ENCODE measurements at regions of chr11 and their contacts with region 1.

Region 1: DNA sequence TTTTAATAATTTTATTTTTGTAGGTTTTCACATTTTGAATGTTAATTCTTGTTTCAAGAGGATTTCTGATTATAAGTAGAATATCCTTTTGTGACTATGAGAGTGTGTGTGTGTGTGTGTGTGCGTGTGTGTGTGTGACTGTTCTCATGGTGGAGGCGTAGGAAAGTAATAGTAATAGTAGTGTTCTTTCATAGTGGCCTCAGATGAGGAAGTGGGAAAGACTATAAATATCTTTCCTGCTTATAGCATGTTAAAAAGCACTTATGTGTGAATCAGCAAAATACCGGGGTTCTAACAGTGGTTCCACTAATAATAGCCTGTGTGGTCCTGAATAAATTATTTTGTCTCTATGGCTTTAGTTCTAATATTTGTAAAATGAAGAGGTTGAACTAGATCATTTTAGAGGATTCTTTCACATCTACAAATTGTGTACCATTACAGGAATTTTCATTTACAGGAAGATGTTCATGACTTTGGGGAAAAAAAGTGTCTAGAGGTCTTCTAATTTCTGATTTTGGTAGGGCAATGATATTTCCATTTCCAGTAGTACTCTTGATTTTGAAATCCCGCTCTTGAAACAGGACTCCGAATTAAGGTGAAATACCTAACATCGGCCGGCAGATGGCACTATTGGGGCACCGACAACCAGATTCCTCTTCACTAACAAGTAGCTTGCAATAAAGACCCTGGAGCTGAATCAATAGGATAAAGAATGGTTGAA is 29.9 kb upstream of the OR10G7 start:
- H3K4me3 Mint-ChIP-seq: peak overlapping the region; percentile 49
- H3K27ac Mint-ChIP-seq: peak overlapping the region; percentile 86
- H3K4me1 Mint-ChIP-seq: peaks cover 42% of the 10 kb centered on the region
- H3K27me3 Mint-ChIP-seq: peaks cover 25% of the 10 kb centered on the region

Region 2: GRCh38 chr11:123741159-123742028 is 329.7 kb before region 1 on chr11 and contains the start of gene ZNF202:
- intact Hi-C with region 1: loop called (anchors 10 kb)
- H3K4me3 Mint-ChIP-seq: peak within 1 kb of the TSS; percentile 97
- H3K27ac Mint-ChIP-seq: peak within 1 kb of the TSS; percentile 77
- H3K4me1 Mint-ChIP-seq: peaks cover 21% of the 10 kb centered on the region
- H3K27me3 Mint-ChIP-seq: peaks cover 11% of the 10 kb centered on the region

Region 3: DNA sequence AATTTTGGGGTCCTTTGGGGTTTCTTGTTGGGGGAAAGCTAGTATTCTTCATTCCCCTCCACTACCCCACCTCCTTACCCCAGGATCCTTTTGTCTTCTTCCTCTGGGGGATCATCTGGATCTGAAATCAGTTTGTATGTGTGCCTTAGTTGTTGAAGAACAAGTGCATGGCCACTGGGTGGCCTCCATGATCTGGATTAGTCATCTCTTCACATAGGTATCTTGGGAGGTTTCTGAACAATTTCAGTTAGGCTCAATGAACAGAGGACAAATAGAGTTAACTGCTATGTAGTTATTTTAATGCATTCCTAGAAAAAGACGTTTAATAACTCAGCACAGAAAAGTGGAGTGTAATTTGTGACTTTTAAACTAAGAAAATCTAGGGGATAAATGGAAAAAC is 37.1 kb after region 1 on chr11:
- intact Hi-C with region 1: loop called (anchors 5 kb)
- H3K4me3 Mint-ChIP-seq: no peak overlapping the region
- H3K27ac Mint-ChIP-seq: no peak overlapping the region
- H3K4me1 Mint-ChIP-seq: peaks cover 17% of the 10 kb centered on the region
- H3K27me3 Mint-ChIP-seq: peaks cover 13% of the 10 kb centered on the region

Region 4: GRCh38 chr11:124194698-124195410 is 123.8 kb after region 1 on chr11:
- intact Hi-C with region 1: loop called (anchors 1 kb)
- H3K4me3 Mint-ChIP-seq: no peak overlapping the region
- H3K27ac Mint-ChIP-seq: no peak overlapping the region
- H3K4me1 Mint-ChIP-seq: peaks cover 13% of the 10 kb centered on the region
- H3K27me3 Mint-ChIP-seq: peaks cover 3% of the 10 kb centered on the region

Region 5: GRCh38 chr11:124277804-124278203 is 206.7 kb after region 1 on chr11:
- intact Hi-C with region 1: loop called (anchors 5 kb)
- H3K4me3 Mint-ChIP-seq: no peak overlapping the region
- H3K27ac Mint-ChIP-seq: peak overlapping the region; percentile 33
- H3K4me1 Mint-ChIP-seq: peaks cover 8% of the 10 kb centered on the region
- H3K27me3 Mint-ChIP-seq: no peaks in the 10 kb centered on the region

Region 6: GRCh38 chr11:124402326-124402922 is 331.3 kb after region 1 on chr11:
- intact Hi-C with region 1: loop called (anchors 5 kb)
- H3K4me3 Mint-ChIP-seq: no peak overlapping the region
- H3K27ac Mint-ChIP-seq: no peak overlapping the region
- H3K4me1 Mint-ChIP-seq: no peaks in the 10 kb centered on the region
- H3K27me3 Mint-ChIP-seq: peaks cover 7% of the 10 kb centered on the region

Region 7: DNA sequence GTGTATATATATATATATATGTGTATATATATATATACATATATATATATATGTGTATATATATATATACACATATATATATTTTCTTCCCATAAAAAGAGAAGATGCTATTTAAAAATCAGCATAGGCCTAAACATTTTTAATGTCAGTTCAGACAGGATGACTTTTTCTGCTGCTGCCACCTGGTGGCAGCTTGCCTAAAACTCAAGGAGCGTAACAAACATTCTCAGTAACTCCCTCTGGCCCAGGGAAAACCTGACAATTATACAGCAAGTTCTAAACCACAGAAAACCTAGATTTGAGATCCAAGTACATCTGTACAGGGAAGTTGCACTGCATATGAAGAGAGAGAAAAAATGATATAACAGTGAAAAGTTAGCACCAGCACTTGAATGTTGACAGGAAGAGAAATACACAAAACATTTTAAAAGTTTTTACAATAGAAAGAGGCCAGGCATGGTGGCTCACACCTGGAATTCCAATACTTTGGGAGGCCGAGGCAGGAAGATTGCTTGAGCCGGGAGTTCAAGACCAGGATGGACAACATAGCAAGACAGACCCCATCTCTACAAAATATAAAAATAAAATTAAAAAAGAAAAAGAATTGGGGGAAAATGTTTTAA is 515.3 kb after region 1 on chr11:
- intact Hi-C with region 1: loop called (anchors 1 kb)
- H3K4me3 Mint-ChIP-seq: no peak overlapping the region
- H3K27ac Mint-ChIP-seq: no peak overlapping the region
- H3K4me1 Mint-ChIP-seq: no peaks in the 10 kb centered on the region
- H3K27me3 Mint-ChIP-seq: peaks cover 13% of the 10 kb centered on the region